Vagina (tissue), 2 donors: ENCODE measurements at regions of chr18 and their contacts with region 1.

Region 1: GRCh38 chr18:8747440-8747937 is 42.1 kb downstream of the MTCL1 start:
- DNase-seq: no peak
- H3K4me3 ChIP-seq: no peak overlapping the region
- H3K27ac ChIP-seq: no peak overlapping the region
- H3K4me1 ChIP-seq: peaks cover 25% of the 10 kb centered on the region
- H3K27me3 ChIP-seq: no peaks in the 10 kb centered on the region
- CTCF ChIP-seq: no peak
- POLR2A ChIP-seq: no peak

Region 2: DNA sequence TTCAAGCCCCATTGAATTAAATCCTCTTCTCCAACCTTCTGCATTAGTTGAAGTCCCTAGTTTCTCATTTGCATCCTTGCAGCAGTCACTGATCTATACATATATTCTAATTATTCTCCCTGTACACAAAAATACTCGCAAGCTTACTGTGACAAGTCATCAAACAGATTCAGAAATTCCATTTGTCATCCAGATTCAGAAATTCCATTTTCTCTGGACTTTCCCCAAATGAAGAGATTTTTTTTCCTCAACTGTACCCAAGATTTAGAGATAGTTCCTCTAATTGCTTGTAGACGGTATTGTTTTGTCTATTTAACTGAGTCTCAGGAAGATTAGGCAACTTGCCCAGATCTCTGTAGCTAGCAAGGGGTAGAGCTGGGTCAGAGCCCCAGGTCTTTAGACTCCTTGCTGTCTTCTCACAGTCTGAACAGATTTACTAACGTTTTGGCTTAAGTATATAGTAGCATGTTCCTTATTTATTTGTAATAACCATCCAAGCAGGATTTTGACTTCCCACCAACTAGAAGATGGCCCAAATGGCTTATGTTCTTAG is 104.1 kb before region 1 on chr18:
- intact Hi-C with region 1: no loop called
- DNase-seq: no peak
- H3K4me3 ChIP-seq: no peak overlapping the region
- H3K27ac ChIP-seq: no peak overlapping the region
- H3K4me1 ChIP-seq: no peaks in the 10 kb centered on the region
- H3K27me3 ChIP-seq: no peaks in the 10 kb centered on the region
- CTCF ChIP-seq: no peak
- POLR2A ChIP-seq: no peak

Region 3: GRCh38 chr18:8788503-8789429 is 41.3 kb after region 1 on chr18:
- intact Hi-C with region 1: loop called (anchors 2 kb)
- DNase-seq: no peak
- H3K4me3 ChIP-seq: no peak overlapping the region
- H3K27ac ChIP-seq: no peak overlapping the region
- H3K4me1 ChIP-seq: peaks cover 15% of the 10 kb centered on the region
- H3K27me3 ChIP-seq: no peaks in the 10 kb centered on the region
- CTCF ChIP-seq: no peak
- POLR2A ChIP-seq: no peak

Region 4: GRCh38 chr18:9055185-9055584 is 307.7 kb after region 1 on chr18:
- intact Hi-C with region 1: no loop called
- DNase-seq: no peak
- H3K4me3 ChIP-seq: no peak overlapping the region
- H3K27ac ChIP-seq: peak overlapping the region; percentile 47
- H3K4me1 ChIP-seq: peaks cover 9% of the 10 kb centered on the region
- H3K27me3 ChIP-seq: no peaks in the 10 kb centered on the region
- CTCF ChIP-seq: no peak
- POLR2A ChIP-seq: no peak